ENCODE measurements at regions of chr19 and their contacts with region 1.

Region 1: GRCh38 chr19:47112997-47113849 is at the start of gene ZC3H4:
- DNase-seq: peak; percentile 98
- ATAC-seq: peak; percentile 82
- H3K4me3 Mint-ChIP-seq: peak within 1 kb of the TSS; percentile 100
- H3K27ac Mint-ChIP-seq: peak within 1 kb of the TSS; percentile 100
- H3K4me1 Mint-ChIP-seq: peaks cover 38% of the 10 kb centered on the region
- H3K27me3 Mint-ChIP-seq: no peaks in the 10 kb centered on the region
- CTCF ChIP-seq: no peak
- total RNA-seq, gene ZC3H4: 83.8 and 89.1 TPM in 2 replicates

Region 2: GRCh38 chr19:46614114-46614722 is 499.0 kb before region 1 on chr19:
- CTCF ChIA-PET with region 1: no interaction called
- POLR2A ChIA-PET with region 1: interaction called, 8 read pairs
- intact Hi-C with region 1: loop called (anchors 5 kb)
- DNase-seq: peak; percentile 82
- ATAC-seq: peak; percentile 71
- H3K4me3 Mint-ChIP-seq: no peak overlapping the region
- H3K27ac Mint-ChIP-seq: peak overlapping the region; percentile 63
- H3K4me1 Mint-ChIP-seq: peaks cover 66% of the 10 kb centered on the region
- H3K27me3 Mint-ChIP-seq: no peaks in the 10 kb centered on the region
- CTCF ChIP-seq: peak; percentile 42

Region 3: DNA sequence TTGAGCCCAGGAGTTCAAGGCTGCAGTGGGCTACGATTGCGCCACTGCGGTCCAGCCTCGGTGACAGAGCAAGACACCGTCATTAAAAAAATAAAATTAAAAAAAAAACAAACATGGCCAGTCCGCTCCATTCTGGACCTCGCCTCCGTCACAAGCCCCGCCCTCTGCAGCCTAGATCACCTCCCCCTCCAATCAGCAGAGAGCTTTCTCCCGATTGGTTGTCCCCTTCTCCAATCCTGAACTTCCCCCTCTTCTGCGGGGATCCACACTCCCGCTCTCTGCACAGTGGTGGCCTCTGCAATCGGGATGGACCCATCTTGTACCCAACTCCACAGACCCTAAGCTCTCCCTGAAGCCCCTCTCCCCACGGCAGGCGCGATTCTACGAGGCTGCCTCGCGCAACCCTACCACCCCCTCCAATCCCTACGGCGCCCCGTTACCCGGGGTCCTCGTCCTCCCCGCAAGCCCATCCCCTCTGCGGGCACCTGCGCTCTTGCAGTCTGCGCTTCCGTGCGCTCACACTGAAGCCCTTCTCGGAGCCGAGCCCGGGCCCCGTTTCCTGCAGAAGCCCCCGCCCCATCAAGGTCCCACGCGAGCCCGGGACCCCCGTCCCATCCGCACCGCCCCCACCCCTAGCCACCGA is 65.3 kb before region 1 on chr19:
- CTCF ChIA-PET with region 1: no interaction called
- POLR2A ChIA-PET with region 1: interaction called, 16 read pairs
- intact Hi-C with region 1: loop called (anchors 1 kb)
- DNase-seq: peak; percentile 52
- ATAC-seq: peak; percentile 32
- H3K4me3 Mint-ChIP-seq: peak overlapping the region; percentile 95
- H3K27ac Mint-ChIP-seq: peak overlapping the region; percentile 89
- H3K4me1 Mint-ChIP-seq: peaks cover 15% of the 10 kb centered on the region
- H3K27me3 Mint-ChIP-seq: no peaks in the 10 kb centered on the region
- CTCF ChIP-seq: no peak

Region 4: GRCh38 chr19:47124937-47125668 is 11.9 kb after region 1 on chr19:
- CTCF ChIA-PET with region 1: interaction called, 6 read pairs
- POLR2A ChIA-PET with region 1: interaction called, 17 read pairs
- intact Hi-C with region 1: loop called (anchors 1 kb)
- DNase-seq: no peak
- ATAC-seq: peak; percentile 54
- H3K4me3 Mint-ChIP-seq: no peak overlapping the region
- H3K27ac Mint-ChIP-seq: no peak overlapping the region
- H3K4me1 Mint-ChIP-seq: peaks cover 3% of the 10 kb centered on the region
- H3K27me3 Mint-ChIP-seq: no peaks in the 10 kb centered on the region
- CTCF ChIP-seq: no peak

Region 5: DNA sequence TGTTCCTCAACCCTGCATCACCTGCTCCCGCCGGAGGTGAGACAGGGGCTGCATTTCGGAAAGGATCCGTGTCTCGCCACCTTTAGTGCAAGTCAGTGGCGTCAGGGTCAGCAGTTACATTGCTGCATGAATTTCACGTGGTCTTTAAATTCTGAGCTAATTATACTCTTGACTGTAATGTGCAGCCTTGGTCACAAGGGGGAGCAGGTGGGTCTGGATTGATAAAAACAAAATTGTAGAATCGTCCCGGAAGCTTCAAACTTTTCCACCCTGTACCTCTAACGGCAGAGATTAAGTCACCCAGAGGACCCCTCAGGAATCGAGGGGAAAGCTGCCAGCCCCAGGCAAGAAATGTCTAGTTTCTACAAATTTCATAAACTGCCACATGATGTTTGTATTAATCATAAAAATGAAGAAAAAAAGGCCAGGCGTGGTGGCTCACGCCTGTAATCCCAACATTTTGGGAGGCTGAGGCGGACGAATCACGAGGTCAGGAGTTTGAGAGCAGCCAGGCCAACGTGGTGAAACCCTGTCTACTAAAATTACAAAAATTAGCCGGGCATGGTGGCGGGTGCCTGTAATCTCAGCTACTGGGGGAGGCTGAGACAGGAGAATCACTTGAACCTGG is 97.6 kb after region 1 on chr19:
- CTCF ChIA-PET with region 1: interaction called, 4 read pairs
- POLR2A ChIA-PET with region 1: interaction called, 11 read pairs
- intact Hi-C with region 1: no loop called
- DNase-seq: peak; percentile 53
- ATAC-seq: peak; percentile 94
- H3K4me3 Mint-ChIP-seq: no peak overlapping the region
- H3K27ac Mint-ChIP-seq: peak overlapping the region; percentile 87
- H3K4me1 Mint-ChIP-seq: peaks cover 9% of the 10 kb centered on the region
- H3K27me3 Mint-ChIP-seq: no peaks in the 10 kb centered on the region
- CTCF ChIP-seq: peak; percentile 83

Region 6: DNA sequence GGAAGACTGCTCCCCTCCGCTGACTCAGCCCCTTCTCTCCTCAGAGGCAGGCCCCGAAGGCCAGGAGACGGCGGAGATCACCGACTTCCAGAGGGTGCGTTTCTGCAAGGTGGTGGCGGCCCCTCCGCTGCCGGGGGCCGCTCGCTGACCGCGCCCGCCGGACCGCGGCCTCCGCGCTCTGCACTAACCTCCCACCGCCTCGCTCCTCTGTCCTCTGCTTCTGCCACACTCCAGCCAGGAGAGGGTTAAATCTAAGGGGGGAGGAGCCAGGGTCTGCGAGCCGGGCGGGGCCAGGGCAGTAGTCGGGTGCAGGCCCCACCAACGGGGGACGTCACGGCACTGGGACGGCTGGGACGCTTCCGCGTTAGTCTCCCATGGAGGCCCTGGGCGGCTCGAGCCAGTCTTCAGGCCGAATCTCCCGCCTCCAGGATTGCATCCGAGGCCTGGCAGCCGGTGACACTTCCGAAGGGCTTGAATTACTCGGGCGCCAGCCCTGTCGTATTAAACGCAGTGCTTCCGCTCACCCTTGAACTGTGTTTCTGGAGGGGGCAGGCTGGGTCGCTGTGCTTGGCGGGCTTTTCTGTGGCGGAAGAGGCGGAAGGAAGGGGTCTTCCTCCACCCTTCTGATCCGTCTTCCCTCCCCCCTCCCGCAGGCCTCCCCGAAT is 160.2 kb after region 1 on chr19:
- CTCF ChIA-PET with region 1: no interaction called
- POLR2A ChIA-PET with region 1: interaction called, 24 read pairs
- intact Hi-C with region 1: loop called (anchors 1 kb)
- DNase-seq: peak; percentile 83
- ATAC-seq: peak; percentile 54
- H3K4me3 Mint-ChIP-seq: peak overlapping the region; percentile 96
- H3K27ac Mint-ChIP-seq: peak overlapping the region; percentile 97
- H3K4me1 Mint-ChIP-seq: peaks cover 27% of the 10 kb centered on the region
- H3K27me3 Mint-ChIP-seq: no peaks in the 10 kb centered on the region
- CTCF ChIP-seq: no peak

Region 7: GRCh38 chr19:47469719-47470118 is 356.5 kb after region 1 on chr19:
- CTCF ChIA-PET with region 1: no interaction called
- POLR2A ChIA-PET with region 1: no interaction called
- intact Hi-C with region 1: no loop called
- DNase-seq: no peak
- ATAC-seq: no peak
- H3K4me3 Mint-ChIP-seq: no peak overlapping the region
- H3K27ac Mint-ChIP-seq: no peak overlapping the region
- H3K4me1 Mint-ChIP-seq: peaks cover 9% of the 10 kb centered on the region
- H3K27me3 Mint-ChIP-seq: peaks cover 53% of the 10 kb centered on the region
- CTCF ChIP-seq: no peak